ENCODE measurements at regions of chr12 and their contacts with region 1.

Region 1: GRCh38 chr12:113424915-113425823 is 3.0 kb downstream of the SDSL start:
- DNase-seq: no peak
- H3K4me3 ChIP-seq: no peak overlapping the region
- H3K27ac ChIP-seq: no peak overlapping the region
- H3K27me3 ChIP-seq: no peaks in the 10 kb centered on the region
- CTCF ChIP-seq: peak; percentile 93

Region 2: DNA sequence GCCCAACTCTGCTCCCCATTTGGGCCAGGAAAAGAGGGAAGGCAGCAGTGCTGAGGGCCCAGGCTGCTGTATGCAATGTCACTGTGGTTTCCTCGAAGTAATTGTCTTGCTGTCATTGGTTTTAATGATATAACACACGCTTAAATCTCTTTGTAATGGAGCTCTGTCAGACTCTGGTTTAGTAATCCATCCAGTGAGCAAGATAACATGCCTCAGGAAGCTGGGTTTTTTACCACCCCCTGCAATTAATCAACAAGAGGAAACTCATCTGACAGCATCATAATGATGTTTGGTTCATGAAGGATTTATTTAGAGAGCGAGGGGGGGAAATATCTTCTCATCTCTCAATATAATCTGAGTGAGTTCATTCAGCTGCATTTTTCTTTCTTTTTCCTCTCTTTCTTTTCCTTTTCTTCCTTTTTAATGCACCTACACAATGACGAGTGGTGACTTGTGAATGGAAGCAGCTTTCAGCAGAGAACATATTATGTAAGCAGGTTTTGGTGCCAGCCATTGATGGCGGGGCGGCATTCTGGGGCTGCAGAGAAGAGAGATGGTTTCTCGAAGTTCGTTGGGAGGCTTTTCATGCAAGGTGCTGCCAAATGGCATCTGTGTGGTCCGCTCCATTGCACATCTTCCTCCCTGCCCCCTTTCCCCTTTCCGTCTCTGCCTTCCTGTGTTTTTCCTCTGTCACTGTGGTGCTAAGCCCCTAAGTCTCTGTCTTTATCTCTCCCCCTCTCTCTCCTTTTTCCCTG is 627.0 kb before region 1 on chr12:
- CTCF ChIA-PET with region 1: no interaction called
- POLR2A ChIA-PET with region 1: no interaction called
- DNase-seq: no peak
- H3K4me3 ChIP-seq: no peak overlapping the region
- H3K27ac ChIP-seq: no peak overlapping the region
- H3K27me3 ChIP-seq: no peaks in the 10 kb centered on the region
- CTCF ChIP-seq: no peak

Region 3: GRCh38 chr12:113048716-113049127 is 376.4 kb before region 1 on chr12:
- CTCF ChIA-PET with region 1: interaction called, 11 read pairs
- POLR2A ChIA-PET with region 1: no interaction called
- DNase-seq: peak; percentile 27
- H3K4me3 ChIP-seq: no peak overlapping the region
- H3K27ac ChIP-seq: no peak overlapping the region
- H3K27me3 ChIP-seq: peaks cover 8% of the 10 kb centered on the region
- CTCF ChIP-seq: peak; percentile 82

Region 4: DNA sequence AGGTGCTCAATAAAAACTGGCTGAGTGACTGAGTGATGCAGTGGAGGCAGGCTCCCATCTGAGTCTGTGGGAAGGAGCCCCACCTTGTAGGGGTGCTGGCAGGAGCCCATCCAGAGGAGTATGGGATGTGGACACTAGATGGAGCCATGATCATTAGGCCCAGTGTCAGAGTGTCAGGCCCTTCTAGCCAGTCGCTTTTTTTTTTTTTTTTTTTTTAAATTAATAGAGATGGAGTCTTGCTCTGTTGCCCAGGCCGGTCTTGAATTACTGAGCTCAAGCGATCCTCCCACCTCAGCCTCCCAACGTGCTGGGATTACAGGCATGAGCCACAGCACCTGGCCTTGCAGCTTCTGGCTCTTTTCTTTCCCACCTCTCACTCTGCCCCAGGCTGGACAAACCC is 228.2 kb before region 1 on chr12:
- CTCF ChIA-PET with region 1: interaction called, 15 read pairs
- POLR2A ChIA-PET with region 1: interaction called, 3 read pairs
- DNase-seq: no peak
- H3K4me3 ChIP-seq: no peak overlapping the region
- H3K27ac ChIP-seq: no peak overlapping the region
- H3K27me3 ChIP-seq: no peaks in the 10 kb centered on the region
- CTCF ChIP-seq: peak; percentile 80

Region 5: GRCh38 chr12:113310489-113310888 is 114.7 kb before region 1 on chr12:
- CTCF ChIA-PET with region 1: interaction called, 53 read pairs
- POLR2A ChIA-PET with region 1: no interaction called
- DNase-seq: no peak
- H3K4me3 ChIP-seq: no peak overlapping the region
- H3K27ac ChIP-seq: no peak overlapping the region
- H3K27me3 ChIP-seq: no peaks in the 10 kb centered on the region
- CTCF ChIP-seq: 0 out of 2 replicates have a peak, but pooled peaks have one; percentile 10

Region 6: DNA sequence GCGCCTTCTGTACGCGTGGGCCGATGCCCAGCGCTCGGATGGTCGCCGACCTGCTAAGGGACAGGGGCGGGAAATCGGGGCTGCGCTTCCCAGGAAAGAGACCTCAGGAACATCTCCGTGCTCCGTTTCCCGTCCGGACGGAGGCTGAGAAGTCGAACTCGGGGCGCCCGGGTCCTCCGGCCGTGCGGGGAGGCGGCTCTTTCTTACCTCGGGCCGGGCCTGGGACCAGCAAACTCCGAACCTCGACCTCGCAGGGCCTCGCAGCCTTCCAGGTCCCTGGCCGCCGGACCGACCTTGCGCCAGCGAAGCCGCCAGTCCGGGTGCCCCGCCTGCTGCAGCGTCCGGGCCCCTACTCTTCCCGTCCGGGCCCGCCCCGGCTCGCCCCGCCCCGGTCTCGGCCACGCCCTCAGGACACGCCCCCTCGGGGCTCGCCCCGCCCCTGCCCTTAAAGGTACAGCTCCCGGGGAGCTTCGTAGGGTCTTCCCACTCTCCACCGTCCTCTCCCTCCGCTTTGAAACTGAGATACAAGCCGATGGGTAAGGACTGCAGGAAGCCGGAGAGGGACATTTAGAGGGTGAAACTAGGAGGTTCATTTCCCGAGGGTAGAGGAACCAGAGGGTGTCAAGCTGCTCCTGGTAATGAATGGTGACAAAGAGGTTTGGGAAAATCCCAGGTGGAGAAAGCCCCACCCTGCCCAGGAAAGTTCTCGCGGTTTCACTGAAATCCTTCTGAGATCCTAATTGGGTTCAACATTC is 90.2 kb before region 1 on chr12 and contains the start of gene SLC8B1:
- CTCF ChIA-PET with region 1: interaction called, 12 read pairs
- POLR2A ChIA-PET with region 1: interaction called, 4 read pairs
- DNase-seq: peak; percentile 15
- H3K4me3 ChIP-seq: peak within 1 kb of the TSS; percentile 70
- H3K27ac ChIP-seq: peak within 1 kb of the TSS; percentile 39
- H3K27me3 ChIP-seq: peaks cover 3% of the 10 kb centered on the region
- CTCF ChIP-seq: no peak
- polyA plus RNA-seq, gene SLC8B1: 12.1 and 17.2 TPM in 2 replicates

Region 7: GRCh38 chr12:113413488-113413939 is 11.7 kb before region 1 on chr12:
- CTCF ChIA-PET with region 1: interaction called, 17 read pairs
- POLR2A ChIA-PET with region 1: no interaction called
- DNase-seq: no peak
- H3K4me3 ChIP-seq: no peak overlapping the region
- H3K27ac ChIP-seq: no peak overlapping the region
- H3K27me3 ChIP-seq: peaks cover 13% of the 10 kb centered on the region
- CTCF ChIP-seq: no peak

Region 8: DNA sequence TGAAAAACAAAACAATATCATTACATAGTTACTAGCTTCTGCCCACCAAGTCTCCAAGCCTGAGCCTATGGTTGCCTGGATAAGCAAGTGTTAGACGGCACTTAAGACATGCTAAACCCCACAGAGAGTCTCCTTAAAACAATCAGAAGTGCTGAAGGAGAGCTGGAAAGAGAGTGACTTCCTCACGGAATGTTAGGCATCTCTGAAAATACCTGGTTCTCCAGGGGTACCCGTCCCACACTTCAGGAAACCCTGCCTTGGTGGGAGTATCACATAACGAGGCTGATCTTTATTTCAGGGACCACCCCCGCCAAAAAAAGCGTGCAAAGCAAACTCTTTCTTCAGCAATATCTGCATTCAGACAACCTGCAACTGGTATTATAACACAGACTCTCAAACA is 28.2 kb after region 1 on chr12:
- CTCF ChIA-PET with region 1: interaction called, 10 read pairs
- POLR2A ChIA-PET with region 1: no interaction called
- DNase-seq: no peak
- H3K4me3 ChIP-seq: no peak overlapping the region
- H3K27ac ChIP-seq: no peak overlapping the region
- H3K27me3 ChIP-seq: peaks cover under 1% of the 10 kb centered on the region
- CTCF ChIP-seq: no peak

Region 9: DNA sequence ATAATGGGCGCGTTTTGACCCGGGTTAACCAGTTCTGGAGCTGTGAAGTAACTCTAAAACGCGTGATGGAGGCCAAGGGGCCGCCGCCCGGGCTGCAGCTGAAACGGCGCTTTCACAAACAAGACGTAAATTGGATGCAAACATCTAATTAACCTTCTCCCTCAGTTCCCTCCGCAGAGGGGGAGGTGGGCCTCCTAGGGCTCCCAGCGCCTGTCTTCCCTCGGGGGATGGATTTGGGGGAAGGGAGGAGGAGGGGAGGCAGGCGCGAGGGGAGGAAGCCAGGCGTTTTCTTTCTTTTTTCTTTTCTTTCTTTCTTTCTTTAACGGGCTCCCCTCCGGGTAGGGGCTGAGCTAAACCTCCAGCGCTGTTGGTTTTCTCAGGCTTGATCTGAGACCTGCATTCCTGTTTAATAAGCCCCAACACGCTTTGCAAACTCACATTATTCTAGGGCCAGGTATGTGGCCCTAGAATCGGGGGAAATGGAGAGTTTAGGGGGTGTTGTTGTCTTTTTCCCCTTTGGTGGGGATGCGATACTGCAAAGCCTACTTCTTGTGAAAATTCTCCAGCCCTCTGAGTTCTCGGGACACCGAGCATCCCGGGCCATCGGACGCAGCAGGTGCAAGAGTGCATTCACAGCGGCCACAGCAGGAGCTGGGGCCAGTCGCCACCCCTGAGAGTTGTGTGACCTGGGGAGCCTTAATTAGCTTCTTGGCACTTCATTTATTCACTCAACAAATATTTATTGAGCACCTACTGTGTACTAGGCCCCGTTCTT is 90.1 kb after region 1 on chr12:
- CTCF ChIA-PET with region 1: no interaction called
- POLR2A ChIA-PET with region 1: no interaction called
- DNase-seq: no peak
- H3K4me3 ChIP-seq: no peak overlapping the region
- H3K27ac ChIP-seq: no peak overlapping the region
- H3K27me3 ChIP-seq: peaks cover 20% of the 10 kb centered on the region
- CTCF ChIP-seq: no peak

Region 10: DNA sequence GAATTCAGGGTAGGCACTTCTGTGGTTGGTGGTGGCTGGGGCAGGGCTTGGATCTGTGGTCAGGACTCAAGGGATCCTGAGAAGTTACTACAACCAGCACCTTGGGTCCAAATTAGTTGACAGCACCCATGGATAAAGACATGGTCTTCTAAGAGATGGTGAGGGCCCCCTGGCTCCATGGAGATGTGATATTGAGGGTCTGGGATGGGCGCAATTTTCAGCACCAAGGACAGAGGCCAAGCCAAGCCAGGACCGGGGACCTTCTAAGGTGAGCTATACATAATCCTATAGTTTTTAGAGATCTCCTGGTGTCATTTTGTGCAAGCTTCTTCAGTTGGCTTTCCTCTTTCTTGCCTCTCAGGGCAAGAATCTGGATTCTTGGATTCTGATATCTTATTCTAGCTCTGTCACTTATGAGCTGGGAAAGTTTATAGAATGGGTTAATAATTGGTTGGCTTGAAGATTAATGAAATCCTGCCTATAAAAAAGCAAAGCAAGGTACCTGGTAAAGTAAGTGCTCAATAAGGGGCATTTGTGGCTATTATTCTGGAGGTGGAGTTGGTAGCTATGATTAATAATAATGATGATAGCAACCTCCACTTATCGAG is 176.6 kb after region 1 on chr12:
- CTCF ChIA-PET with region 1: no interaction called
- POLR2A ChIA-PET with region 1: no interaction called
- DNase-seq: no peak
- H3K4me3 ChIP-seq: no peak overlapping the region
- H3K27ac ChIP-seq: no peak overlapping the region
- H3K27me3 ChIP-seq: no peaks in the 10 kb centered on the region
- CTCF ChIP-seq: no peak

Measured in AG04450 (cell line).